Posterior cingulate gyrus (tissue), 11 donors: ENCODE measurements at regions of chr10 and their contacts with region 1.

Region 1: GRCh38 chr10:66180581-66181318 is 745.1 kb upstream of the LRRTM3 start:
- DNase-seq: no peak

Region 2: DNA sequence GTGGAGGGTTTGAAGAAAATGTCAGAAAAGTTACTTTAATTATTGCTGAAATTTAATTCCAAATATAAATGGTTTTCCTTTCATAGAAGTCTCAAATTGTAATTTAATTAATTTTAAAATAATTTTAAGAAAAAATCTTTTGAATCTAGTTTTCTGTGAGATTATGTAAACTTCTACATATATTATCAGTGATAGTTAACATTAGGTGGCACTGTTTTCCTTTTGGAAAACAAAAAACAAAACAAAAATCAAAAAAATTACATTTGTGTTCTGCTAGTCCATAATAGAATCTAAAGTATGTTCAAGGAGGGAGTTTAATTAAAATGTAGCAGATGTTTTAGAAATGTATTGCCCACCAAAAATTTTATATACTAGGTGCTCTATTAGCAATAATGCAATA is 1202.8 kb before region 1 on chr10:
- intact Hi-C with region 1: loop called (anchors 10 kb)
- DNase-seq: no peak

Region 3: GRCh38 chr10:66112012-66112411 is 68.7 kb before region 1 on chr10:
- intact Hi-C with region 1: no loop called
- DNase-seq: no peak